Body of pancreas (tissue), 4 donors: ENCODE measurements at regions of chr13 and their contacts with region 1.

Region 1: DNA sequence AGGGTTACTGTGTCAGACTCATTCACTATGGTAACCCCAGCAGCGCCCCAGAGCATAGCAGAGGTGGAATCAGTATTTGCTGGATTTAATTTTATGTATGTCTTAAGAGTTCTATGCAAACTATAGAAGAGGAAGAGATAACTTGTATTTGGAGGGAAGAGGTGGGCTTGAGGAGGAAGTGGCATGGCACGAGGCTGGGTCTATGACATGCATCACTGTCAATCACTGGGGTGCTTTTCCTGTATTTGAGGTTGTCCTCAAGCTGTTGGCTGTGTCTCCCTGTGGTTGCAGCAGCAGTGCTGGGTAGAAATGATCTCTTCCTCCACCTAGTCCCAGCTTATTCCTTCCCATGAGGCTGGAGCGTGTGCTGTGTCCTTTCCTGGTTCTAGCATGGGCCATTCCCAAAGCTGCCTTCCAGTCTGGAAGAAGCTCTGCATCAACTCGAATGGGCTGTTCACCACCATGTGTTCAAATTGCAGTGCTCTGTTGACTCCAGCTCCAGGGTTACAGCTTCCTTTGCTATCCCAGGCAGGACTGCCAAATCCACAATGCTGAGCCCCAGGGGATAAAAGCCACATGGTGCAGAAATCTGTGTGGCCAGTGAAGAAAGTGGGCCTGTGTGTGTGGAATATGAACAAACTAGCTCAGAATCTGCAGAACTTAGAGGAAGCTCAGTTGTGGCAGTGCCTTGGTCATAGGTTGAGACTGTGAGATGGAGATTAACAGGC is 73.1 kb upstream of the MTIF3 start:
- DNase-seq: no peak
- ATAC-seq: no peak
- H3K4me3 ChIP-seq: no peak overlapping the region
- H3K27ac ChIP-seq: no peak overlapping the region
- H3K4me1 ChIP-seq: no peaks in the 10 kb centered on the region
- H3K27me3 ChIP-seq: no peaks in the 10 kb centered on the region
- CTCF ChIP-seq: no peak
- POLR2A ChIP-seq: no peak

Region 2: GRCh38 chr13:27379694-27380641 is 143.5 kb before region 1 on chr13:
- intact Hi-C with region 1: loop called (anchors 10 kb)
- DNase-seq: peak; percentile 80 to 90 (median 88)
- ATAC-seq: peak; percentile 88
- H3K4me3 ChIP-seq: no peak overlapping the region
- H3K27ac ChIP-seq: peak overlapping the region in 3 of 4 donors; percentile 6 to 31 (median 21)
- H3K4me1 ChIP-seq: peaks cover 10% of the 10 kb centered on the region
- H3K27me3 ChIP-seq: no peaks in the 10 kb centered on the region
- CTCF ChIP-seq: peak; percentile 35 to 91 (median 82)
- POLR2A ChIP-seq: peak in 2 of 3 donors; percentile 12 to 22

Region 3: DNA sequence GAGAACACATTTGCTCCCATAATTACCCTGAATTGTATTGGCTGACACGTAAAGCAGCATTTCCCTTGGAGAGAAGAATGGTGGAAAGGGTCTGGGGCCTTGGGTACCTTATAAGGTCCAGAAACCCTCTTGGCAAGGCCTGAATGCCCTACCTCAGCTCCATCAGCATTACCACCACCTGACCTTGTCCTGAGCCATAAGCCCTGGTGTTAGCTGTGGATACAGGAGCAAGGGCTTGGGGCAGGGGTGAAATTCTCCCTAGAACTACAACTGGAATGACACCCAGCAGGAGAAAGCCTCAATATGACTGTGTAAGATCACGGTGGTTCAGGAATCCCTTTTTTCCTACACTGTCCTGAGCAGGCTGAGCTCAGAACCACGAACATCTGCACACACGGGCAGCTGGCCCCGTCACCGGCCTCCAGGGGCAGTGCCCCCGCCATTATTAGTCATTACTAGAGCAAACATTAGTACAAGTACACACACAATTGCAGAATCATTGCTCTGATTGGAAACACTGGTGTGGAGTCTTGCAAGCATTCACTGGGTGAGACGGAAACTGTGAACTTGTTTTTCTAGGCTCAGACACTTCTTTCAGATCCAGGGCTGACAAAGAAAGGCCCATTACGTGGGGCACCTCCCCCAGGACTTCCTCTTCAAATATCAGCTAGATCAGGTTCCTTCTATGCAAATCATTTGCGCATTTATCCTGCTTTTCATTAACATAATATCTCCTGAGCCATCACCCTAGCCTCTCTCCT is 46.4 kb before region 1 on chr13:
- intact Hi-C with region 1: no loop called
- DNase-seq: peak; percentile 33 to 79 (median 53)
- ATAC-seq: peak; percentile 62
- H3K4me3 ChIP-seq: no peak overlapping the region
- H3K27ac ChIP-seq: peak overlapping the region in 3 of 4 donors; percentile 1 to 20 (median 7)
- H3K4me1 ChIP-seq: no peaks in the 10 kb centered on the region
- H3K27me3 ChIP-seq: no peaks in the 10 kb centered on the region
- CTCF ChIP-seq: peak in 2 of 7 experiments; percentile 11 to 45
- POLR2A ChIP-seq: peak in 1 of 3 donors; percentile 19